CD4-positive, alpha-beta T cell (primary cell): ENCODE measurements at regions of chr22 and their contacts with region 1.

Region 1: GRCh38 chr22:25081409-25081824 is 118.2 kb upstream of the CRYBB3 start:
- DNase-seq: peak; percentile 23 to 74 (median 46)
- ATAC-seq: peak; percentile 84
- H3K4me3 ChIP-seq: no peak overlapping the region
- H3K4me3 Mint-ChIP-seq: no peak overlapping the region
- H3K27ac ChIP-seq: no peak overlapping the region
- H3K27ac Mint-ChIP-seq: peak overlapping the region; percentile 63
- H3K4me1 ChIP-seq: peaks cover 29% of the 10 kb centered on the region
- H3K4me1 Mint-ChIP-seq: peaks cover 55% of the 10 kb centered on the region
- H3K27me3 ChIP-seq: no peaks in the 10 kb centered on the region
- H3K27me3 Mint-ChIP-seq: no peaks in the 10 kb centered on the region
- CTCF ChIP-seq: peak; percentile 68

Region 2: GRCh38 chr22:25048659-25049647 is 32.5 kb before region 1 on chr22:
- CTCF ChIA-PET with region 1: interaction called, 14 read pairs
- POLR2A ChIA-PET with region 1: no interaction called
- intact Hi-C with region 1: no loop called
- DNase-seq: peak; percentile 55 to 86 (median 65)
- ATAC-seq: peak; percentile 92
- H3K4me3 ChIP-seq: no peak overlapping the region
- H3K4me3 Mint-ChIP-seq: no peak overlapping the region
- H3K27ac ChIP-seq: no peak overlapping the region
- H3K27ac Mint-ChIP-seq: no peak overlapping the region
- H3K4me1 ChIP-seq: no peaks in the 10 kb centered on the region
- H3K4me1 Mint-ChIP-seq: no peaks in the 10 kb centered on the region
- H3K27me3 ChIP-seq: no peaks in the 10 kb centered on the region
- H3K27me3 Mint-ChIP-seq: no peaks in the 10 kb centered on the region
- CTCF ChIP-seq: peak; percentile 78

Region 3: GRCh38 chr22:25057013-25057881 is 24.2 kb before region 1 on chr22:
- CTCF ChIA-PET with region 1: interaction called, 17 read pairs
- POLR2A ChIA-PET with region 1: interaction called, 43 read pairs
- intact Hi-C with region 1: loop called (anchors 1 kb)
- DNase-seq: peak; percentile 59 to 87 (median 72)
- ATAC-seq: peak; percentile 55
- H3K4me3 ChIP-seq: no peak overlapping the region
- H3K4me3 Mint-ChIP-seq: no peak overlapping the region
- H3K27ac ChIP-seq: no peak overlapping the region
- H3K27ac Mint-ChIP-seq: no peak overlapping the region
- H3K4me1 ChIP-seq: peaks cover 27% of the 10 kb centered on the region
- H3K4me1 Mint-ChIP-seq: peaks cover 33% of the 10 kb centered on the region
- H3K27me3 ChIP-seq: no peaks in the 10 kb centered on the region
- H3K27me3 Mint-ChIP-seq: no peaks in the 10 kb centered on the region
- CTCF ChIP-seq: peak; percentile 80

Region 4: DNA sequence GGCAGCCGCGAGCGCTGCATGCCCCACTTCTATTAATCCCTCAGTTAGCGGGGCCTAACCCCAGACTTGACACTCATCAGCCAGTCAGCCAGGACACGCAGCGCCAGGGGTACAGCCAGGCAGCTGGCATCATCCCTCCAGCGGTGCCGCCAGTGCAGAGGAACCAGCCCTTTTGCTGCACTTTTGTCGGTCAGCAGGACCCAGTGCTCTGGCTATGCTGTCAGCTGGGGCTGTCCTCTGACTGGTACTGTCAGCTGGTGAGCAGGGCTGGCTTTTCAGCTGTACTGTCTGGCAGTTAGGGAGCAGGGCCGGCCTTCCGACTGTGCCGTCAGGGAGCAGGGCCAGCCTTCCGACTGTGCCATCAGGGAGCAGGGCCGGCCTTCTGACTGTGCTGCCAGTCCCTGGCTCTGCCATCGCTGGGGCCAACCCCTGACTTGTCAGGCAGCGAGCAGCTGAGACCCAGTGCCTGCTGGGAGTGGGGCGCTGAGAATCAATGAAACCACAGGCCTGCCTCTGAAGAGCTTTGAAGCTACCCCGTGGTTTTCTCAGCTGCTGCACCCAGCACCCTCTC is 13.5 kb before region 1 on chr22:
- CTCF ChIA-PET with region 1: interaction called, 17 read pairs
- POLR2A ChIA-PET with region 1: interaction called, 57 read pairs
- intact Hi-C with region 1: no loop called
- DNase-seq: peak; percentile 75 to 97 (median 86)
- ATAC-seq: peak; percentile 83
- H3K4me3 ChIP-seq: peak overlapping the region; percentile 29
- H3K4me3 Mint-ChIP-seq: peak overlapping the region; percentile 73
- H3K27ac ChIP-seq: peak overlapping the region; percentile 83 to 90
- H3K27ac Mint-ChIP-seq: peak overlapping the region; percentile 96
- H3K4me1 ChIP-seq: peaks cover 93% of the 10 kb centered on the region
- H3K4me1 Mint-ChIP-seq: peaks cover 81% of the 10 kb centered on the region
- H3K27me3 ChIP-seq: no peaks in the 10 kb centered on the region
- H3K27me3 Mint-ChIP-seq: no peaks in the 10 kb centered on the region
- CTCF ChIP-seq: no peak

Region 5: DNA sequence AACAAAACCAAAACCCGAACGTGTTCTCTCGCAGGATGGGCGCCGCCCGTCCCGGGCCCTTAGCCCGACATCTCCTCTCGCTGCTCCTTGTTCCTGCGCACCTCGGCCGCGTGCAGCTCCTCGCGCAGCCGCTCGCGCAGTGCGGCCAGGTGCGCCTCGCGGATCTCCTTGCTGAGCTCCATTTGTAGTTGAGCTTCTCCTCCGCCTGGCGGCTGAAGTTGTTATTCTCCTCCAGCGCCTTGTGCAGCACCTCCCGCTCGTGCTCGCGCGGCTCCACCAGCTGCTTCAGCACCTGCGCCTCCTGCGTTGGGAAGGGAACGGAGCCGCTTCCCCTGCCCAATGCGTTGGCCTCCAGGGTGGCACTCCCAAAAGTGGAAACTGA is 97.8 kb after region 1 on chr22:
- CTCF ChIA-PET with region 1: no interaction called
- POLR2A ChIA-PET with region 1: no interaction called
- intact Hi-C with region 1: no loop called
- DNase-seq: no peak
- ATAC-seq: peak; percentile 58
- H3K4me3 ChIP-seq: no peak overlapping the region
- H3K4me3 Mint-ChIP-seq: no peak overlapping the region
- H3K27ac ChIP-seq: no peak overlapping the region
- H3K27ac Mint-ChIP-seq: no peak overlapping the region
- H3K4me1 ChIP-seq: no peaks in the 10 kb centered on the region
- H3K4me1 Mint-ChIP-seq: no peaks in the 10 kb centered on the region
- H3K27me3 ChIP-seq: no peaks in the 10 kb centered on the region
- H3K27me3 Mint-ChIP-seq: no peaks in the 10 kb centered on the region
- CTCF ChIP-seq: no peak

Region 6: DNA sequence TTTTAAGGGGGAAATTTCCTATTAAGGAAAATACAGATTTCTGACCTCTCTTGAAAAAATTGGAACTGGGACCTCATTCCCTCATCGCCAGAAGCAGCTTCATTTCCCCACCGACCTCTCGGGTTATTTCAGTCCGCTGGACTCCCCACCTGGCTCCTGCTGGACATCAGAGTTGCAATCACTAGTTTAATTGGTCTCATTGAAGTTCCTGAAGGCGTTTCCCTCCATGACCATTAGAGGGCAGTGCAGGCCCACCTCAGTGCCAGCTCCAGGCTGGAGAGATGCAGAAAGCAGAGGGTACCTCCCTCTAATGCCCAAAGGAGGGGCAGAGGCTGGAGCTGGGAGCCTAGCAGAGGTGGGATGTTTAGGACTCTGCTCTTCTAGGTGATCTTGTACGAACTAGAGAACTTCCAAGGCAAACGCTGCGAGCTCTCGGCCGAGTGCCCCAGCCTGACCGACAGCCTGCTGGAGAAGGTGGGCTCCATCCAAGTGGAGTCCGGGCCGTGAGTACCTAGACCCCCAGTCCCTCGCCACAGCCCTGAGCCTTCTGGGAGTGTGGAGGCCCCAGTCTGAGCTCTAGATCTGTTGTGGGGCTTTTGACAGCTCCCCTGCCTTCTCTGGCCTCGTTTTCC is 121.0 kb after region 1 on chr22:
- CTCF ChIA-PET with region 1: no interaction called
- POLR2A ChIA-PET with region 1: no interaction called
- intact Hi-C with region 1: no loop called
- DNase-seq: peak; percentile 16 to 68 (median 41)
- ATAC-seq: peak; percentile 61
- H3K4me3 ChIP-seq: no peak overlapping the region
- H3K4me3 Mint-ChIP-seq: no peak overlapping the region
- H3K27ac ChIP-seq: no peak overlapping the region
- H3K27ac Mint-ChIP-seq: no peak overlapping the region
- H3K4me1 ChIP-seq: no peaks in the 10 kb centered on the region
- H3K4me1 Mint-ChIP-seq: no peaks in the 10 kb centered on the region
- H3K27me3 ChIP-seq: no peaks in the 10 kb centered on the region
- H3K27me3 Mint-ChIP-seq: no peaks in the 10 kb centered on the region
- CTCF ChIP-seq: peak; percentile 90

Region 7: GRCh38 chr22:25362215-25362882 is 280.9 kb after region 1 on chr22:
- CTCF ChIA-PET with region 1: no interaction called
- POLR2A ChIA-PET with region 1: no interaction called
- intact Hi-C with region 1: loop called in 1 of 2 experiments (anchors 5 kb)
- DNase-seq: peak; percentile 44 to 77 (median 57)
- ATAC-seq: peak; percentile 49
- H3K4me3 ChIP-seq: no peak overlapping the region
- H3K4me3 Mint-ChIP-seq: no peak overlapping the region
- H3K27ac ChIP-seq: no peak overlapping the region
- H3K27ac Mint-ChIP-seq: no peak overlapping the region
- H3K4me1 ChIP-seq: peaks cover 9% of the 10 kb centered on the region
- H3K4me1 Mint-ChIP-seq: no peaks in the 10 kb centered on the region
- H3K27me3 ChIP-seq: no peaks in the 10 kb centered on the region
- H3K27me3 Mint-ChIP-seq: no peaks in the 10 kb centered on the region
- CTCF ChIP-seq: peak; percentile 96